B cell (primary cell): ENCODE measurements at regions of chr12 and their contacts with region 1.

Region 1: GRCh38 chr12:113232840-113233585 is 11.7 kb downstream of the TPCN1 start:
- DNase-seq: peak; percentile 94
- ATAC-seq: peak; percentile 83
- H3K4me3 ChIP-seq: peak overlapping the region in 4 of 5 experiments; percentile 7 to 31 (median 17)
- H3K4me3 Mint-ChIP-seq: peak overlapping the region; percentile 82
- H3K27ac ChIP-seq: peak overlapping the region; percentile 54 to 73
- H3K27ac Mint-ChIP-seq: peak overlapping the region; percentile 87
- H3K4me1 ChIP-seq: peaks cover 67 to 76% of the 10 kb centered on the region in 2 donors
- H3K4me1 Mint-ChIP-seq: peaks cover 78% of the 10 kb centered on the region
- H3K27me3 ChIP-seq: no peaks in the 10 kb centered on the region
- H3K27me3 Mint-ChIP-seq: no peaks in the 10 kb centered on the region
- CTCF ChIP-seq: peak; percentile 74

Region 2: GRCh38 chr12:113196996-113197395 is 36.0 kb before region 1 on chr12:
- CTCF ChIA-PET with region 1: interaction called, 96 read pairs
- POLR2A ChIA-PET with region 1: interaction called, 17 read pairs
- intact Hi-C with region 1: loop called (anchors 1 kb)
- DNase-seq: peak; percentile 84
- ATAC-seq: peak; percentile 94
- H3K4me3 ChIP-seq: no peak overlapping the region
- H3K4me3 Mint-ChIP-seq: peak overlapping the region; percentile 0
- H3K27ac ChIP-seq: no peak overlapping the region
- H3K27ac Mint-ChIP-seq: peak overlapping the region; percentile 73
- H3K4me1 ChIP-seq: peaks cover 12 to 18% of the 10 kb centered on the region in 2 donors
- H3K4me1 Mint-ChIP-seq: peaks cover 20% of the 10 kb centered on the region
- H3K27me3 ChIP-seq: no peaks in the 10 kb centered on the region
- H3K27me3 Mint-ChIP-seq: no peaks in the 10 kb centered on the region
- CTCF ChIP-seq: peak; percentile 73

Region 3: GRCh38 chr12:113214938-113215400 is 18.0 kb before region 1 on chr12:
- CTCF ChIA-PET with region 1: interaction called, 53 read pairs
- POLR2A ChIA-PET with region 1: interaction called, 56 read pairs
- intact Hi-C with region 1: no loop called
- DNase-seq: peak; percentile 42
- ATAC-seq: peak; percentile 24
- H3K4me3 ChIP-seq: no peak overlapping the region
- H3K4me3 Mint-ChIP-seq: no peak overlapping the region
- H3K27ac ChIP-seq: no peak overlapping the region
- H3K27ac Mint-ChIP-seq: no peak overlapping the region
- H3K4me1 ChIP-seq: peaks cover 23 to 32% of the 10 kb centered on the region in 2 donors
- H3K4me1 Mint-ChIP-seq: peaks cover 37% of the 10 kb centered on the region
- H3K27me3 ChIP-seq: no peaks in the 10 kb centered on the region
- H3K27me3 Mint-ChIP-seq: no peaks in the 10 kb centered on the region
- CTCF ChIP-seq: no peak

Region 4: DNA sequence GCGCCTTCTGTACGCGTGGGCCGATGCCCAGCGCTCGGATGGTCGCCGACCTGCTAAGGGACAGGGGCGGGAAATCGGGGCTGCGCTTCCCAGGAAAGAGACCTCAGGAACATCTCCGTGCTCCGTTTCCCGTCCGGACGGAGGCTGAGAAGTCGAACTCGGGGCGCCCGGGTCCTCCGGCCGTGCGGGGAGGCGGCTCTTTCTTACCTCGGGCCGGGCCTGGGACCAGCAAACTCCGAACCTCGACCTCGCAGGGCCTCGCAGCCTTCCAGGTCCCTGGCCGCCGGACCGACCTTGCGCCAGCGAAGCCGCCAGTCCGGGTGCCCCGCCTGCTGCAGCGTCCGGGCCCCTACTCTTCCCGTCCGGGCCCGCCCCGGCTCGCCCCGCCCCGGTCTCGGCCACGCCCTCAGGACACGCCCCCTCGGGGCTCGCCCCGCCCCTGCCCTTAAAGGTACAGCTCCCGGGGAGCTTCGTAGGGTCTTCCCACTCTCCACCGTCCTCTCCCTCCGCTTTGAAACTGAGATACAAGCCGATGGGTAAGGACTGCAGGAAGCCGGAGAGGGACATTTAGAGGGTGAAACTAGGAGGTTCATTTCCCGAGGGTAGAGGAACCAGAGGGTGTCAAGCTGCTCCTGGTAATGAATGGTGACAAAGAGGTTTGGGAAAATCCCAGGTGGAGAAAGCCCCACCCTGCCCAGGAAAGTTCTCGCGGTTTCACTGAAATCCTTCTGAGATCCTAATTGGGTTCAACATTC is 102.0 kb after region 1 on chr12 and contains the start of gene SLC8B1:
- CTCF ChIA-PET with region 1: no interaction called
- POLR2A ChIA-PET with region 1: no interaction called
- intact Hi-C with region 1: loop called (anchors 1 kb)
- DNase-seq: peak; percentile 88
- ATAC-seq: peak; percentile 100
- H3K4me3 ChIP-seq: peak within 1 kb of the TSS; percentile 74 to 96 (median 85)
- H3K4me3 Mint-ChIP-seq: peak within 1 kb of the TSS; percentile 98
- H3K27ac ChIP-seq: peak within 1 kb of the TSS in 1 of 2 donors; percentile 21
- H3K27ac Mint-ChIP-seq: peak within 1 kb of the TSS; percentile 78
- H3K4me1 ChIP-seq: peaks cover 29 to 36% of the 10 kb centered on the region in 2 donors
- H3K4me1 Mint-ChIP-seq: peaks cover 35% of the 10 kb centered on the region
- H3K27me3 ChIP-seq: no peaks in the 10 kb centered on the region
- H3K27me3 Mint-ChIP-seq: no peaks in the 10 kb centered on the region
- CTCF ChIP-seq: no peak
- total RNA-seq, gene SLC8B1: 34.1 and 35.6 TPM in 2 replicates